AG04449 (cell line): ENCODE measurements at regions of chr16 and their contacts with region 1.

Region 1: DNA sequence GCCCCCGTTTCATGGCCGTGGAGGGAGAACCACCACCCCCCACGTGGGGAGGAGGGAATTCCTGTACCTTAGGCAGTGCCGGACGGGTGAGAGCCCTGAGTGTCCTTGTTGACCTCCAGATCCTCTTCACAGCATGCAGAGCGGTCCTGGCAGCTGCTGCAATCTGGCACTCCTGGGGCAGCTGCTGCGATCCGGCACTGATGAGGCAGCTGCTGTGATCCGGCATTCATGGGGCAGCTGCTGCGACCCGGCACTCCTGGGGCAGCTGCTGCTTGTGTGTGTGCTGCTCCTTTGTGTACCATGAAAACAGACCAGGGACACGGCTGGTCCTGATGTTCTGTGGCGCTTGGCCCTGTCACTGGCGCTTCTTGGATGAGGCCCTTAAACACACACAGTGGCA is 12.8 kb downstream of the ZNF778 start:
- DNase-seq: no peak
- H3K4me3 ChIP-seq: no peak overlapping the region
- CTCF ChIP-seq: no peak

Region 2: DNA sequence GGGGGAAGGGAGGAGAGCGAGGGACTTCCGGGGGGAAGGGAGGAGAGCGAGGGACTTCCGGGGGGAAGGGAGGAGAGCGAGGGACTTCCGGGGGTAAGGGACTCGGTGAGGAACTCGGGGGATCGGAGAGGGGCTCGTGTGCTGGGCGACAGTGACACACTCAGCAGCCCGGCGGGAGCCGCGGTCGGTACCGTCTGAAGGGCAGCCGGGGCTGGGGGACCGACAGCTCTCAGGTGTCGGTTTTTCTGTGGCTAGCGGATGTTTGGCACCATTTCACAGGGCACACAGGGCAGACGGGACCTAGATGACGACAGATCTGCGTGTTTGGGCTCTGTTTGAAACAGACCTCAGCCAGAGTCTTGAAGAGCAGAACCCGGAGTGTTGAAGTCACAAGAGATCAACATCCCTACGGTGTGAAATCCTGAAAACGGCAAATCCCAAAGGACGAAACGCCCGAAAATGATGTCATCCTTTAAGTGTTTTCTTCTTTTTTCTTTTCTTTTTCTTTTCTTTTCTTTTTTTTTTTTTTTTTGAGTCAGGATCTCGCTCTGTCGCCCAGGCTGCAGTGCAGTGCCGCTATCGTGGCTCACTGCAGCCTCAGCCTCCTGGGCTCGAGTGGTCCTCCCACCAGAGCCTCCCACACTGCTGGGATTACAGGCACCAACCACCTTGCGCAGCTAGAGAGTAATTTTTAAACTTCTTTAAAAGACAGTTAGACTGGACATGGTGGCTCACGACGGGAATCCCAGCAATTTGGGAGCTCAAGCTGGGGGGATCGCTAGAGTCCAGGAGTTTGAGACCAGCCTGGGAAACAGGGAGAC is 11.1 kb after region 1 on chr16:
- CTCF ChIA-PET with region 1: interaction called, 16 read pairs
- POLR2A ChIA-PET with region 1: no interaction called
- DNase-seq: peak; percentile 28
- H3K4me3 ChIP-seq: peak overlapping the region; percentile 96
- CTCF ChIP-seq: no peak